PC-9 (cell line): ENCODE measurements at regions of chr1 and their contacts with region 1.

Region 1: DNA sequence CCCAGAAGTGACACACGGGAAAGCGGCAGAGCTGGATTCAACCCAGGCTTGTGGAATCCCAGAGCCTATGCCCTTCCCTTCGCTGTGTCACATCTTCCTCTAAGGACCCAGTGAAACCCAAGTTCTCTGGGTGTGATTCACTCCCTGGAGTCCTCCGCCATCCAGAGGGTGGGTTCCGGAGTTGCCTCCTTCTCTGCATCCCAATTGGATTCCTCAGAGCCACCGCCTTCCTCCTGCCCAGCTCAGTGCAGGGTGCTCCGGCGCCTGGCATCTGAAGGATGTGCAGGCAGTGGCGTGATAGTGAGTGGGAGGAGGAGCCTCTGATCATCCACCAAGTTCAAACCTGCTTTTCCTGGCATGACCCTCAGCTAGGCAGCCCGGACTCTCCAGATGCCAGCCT is 20.8 kb upstream of the RCC2 start:
- DNase-seq: peak; percentile 85 to 94
- H3K4me3 ChIP-seq: peak overlapping the region; percentile 9; the same call in 1 of the 2 replicates
- H3K27ac ChIP-seq: peak overlapping the region; percentile 87
- H3K4me1 ChIP-seq: peaks cover 10% of the 10 kb centered on the region; the same call in 1 of the 2 replicates
- H3K27me3 ChIP-seq: no peaks in the 10 kb centered on the region
- CTCF ChIP-seq: no peak

Region 2: DNA sequence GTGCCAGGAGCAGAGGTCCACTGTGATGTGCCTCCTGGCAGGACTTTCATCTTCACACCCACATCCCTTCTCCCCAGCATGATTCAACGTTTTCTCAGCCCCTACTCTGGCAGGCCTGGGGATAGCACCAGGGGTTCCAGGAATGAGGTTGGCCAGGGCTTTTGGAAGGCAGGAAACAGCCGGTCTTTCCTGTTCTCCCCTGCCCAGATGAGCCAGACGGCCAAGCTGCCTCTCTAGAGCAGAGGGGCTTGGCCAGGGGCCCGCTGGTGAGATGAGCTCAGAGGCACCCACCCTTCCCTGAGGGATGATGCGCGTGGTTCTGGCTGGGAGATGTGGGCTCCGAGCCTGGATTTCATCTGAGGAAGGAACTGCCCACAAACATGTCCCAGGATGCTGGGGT is 475.5 kb before region 1 on chr1:
- CTCF ChIA-PET with region 1: no interaction called
- POLR2A ChIA-PET with region 1: no interaction called
- intact Hi-C with region 1: no loop called
- DNase-seq: peak; percentile 70 to 81
- H3K4me3 ChIP-seq: no peak overlapping the region
- H3K27ac ChIP-seq: peak overlapping the region; percentile 43; the same call in 1 of the 2 replicates
- H3K4me1 ChIP-seq: peaks cover 11% of the 10 kb centered on the region
- H3K27me3 ChIP-seq: no peaks in the 10 kb centered on the region
- CTCF ChIP-seq: no peak

Region 3: GRCh38 chr1:17475729-17476128 is 15.5 kb after region 1 on chr1:
- CTCF ChIA-PET with region 1: interaction called, 6 read pairs
- POLR2A ChIA-PET with region 1: no interaction called
- intact Hi-C with region 1: loop called (anchors 1 kb)
- DNase-seq: peak; percentile 75 to 90
- H3K4me3 ChIP-seq: no peak overlapping the region
- H3K27ac ChIP-seq: no peak overlapping the region; the same call in 1 of the 2 replicates
- H3K4me1 ChIP-seq: peaks cover 20% of the 10 kb centered on the region
- H3K27me3 ChIP-seq: no peaks in the 10 kb centered on the region
- CTCF ChIP-seq: no peak